ENCODE measurements at regions of chr11 and their contacts with region 1.

Region 1: GRCh38 chr11:87803748-87804147 is 371.5 kb downstream of the RAB38 start:
- DNase-seq: no peak
- H3K4me3 ChIP-seq: no peak overlapping the region
- H3K4me3 Mint-ChIP-seq: no peak overlapping the region
- H3K27ac Mint-ChIP-seq: no peak overlapping the region
- H3K4me1 ChIP-seq: no peaks in the 10 kb centered on the region
- H3K4me1 Mint-ChIP-seq: no peaks in the 10 kb centered on the region
- H3K27me3 ChIP-seq: no peaks in the 10 kb centered on the region
- H3K27me3 Mint-ChIP-seq: no peaks in the 10 kb centered on the region
- CTCF ChIP-seq: no peak

Region 2: GRCh38 chr11:87754685-87755084 is 49.1 kb before region 1 on chr11:
- CTCF ChIA-PET with region 1: no interaction called
- POLR2A ChIA-PET with region 1: no interaction called
- intact Hi-C with region 1: loop called (anchors 5 kb)
- DNase-seq: no peak
- H3K4me3 ChIP-seq: no peak overlapping the region
- H3K4me3 Mint-ChIP-seq: no peak overlapping the region
- H3K27ac Mint-ChIP-seq: no peak overlapping the region
- H3K4me1 ChIP-seq: no peaks in the 10 kb centered on the region
- H3K4me1 Mint-ChIP-seq: no peaks in the 10 kb centered on the region
- H3K27me3 ChIP-seq: 0 out of 2 replicates have a peak, but pooled peaks cover 1% of the 10 kb centered on the region
- H3K27me3 Mint-ChIP-seq: peaks cover 5% of the 10 kb centered on the region
- CTCF ChIP-seq: no peak